Activated CD8-positive, alpha-beta T cell treated with anti-CD3 and anti-CD28 coated beads for 36 hours (primary cell): ENCODE measurements at regions of chr11 and their contacts with region 1.

Region 1: GRCh38 chr11:130861902-130862860 is 54.1 kb downstream of the SNX19 start:
- DNase-seq: peak; percentile 93
- ATAC-seq: peak; percentile 96
- H3K4me3 Mint-ChIP-seq: no peak overlapping the region
- H3K27ac Mint-ChIP-seq: no peak overlapping the region
- H3K4me1 Mint-ChIP-seq: peaks cover 3% of the 10 kb centered on the region
- H3K27me3 Mint-ChIP-seq: peaks cover 3% of the 10 kb centered on the region
- CTCF ChIP-seq: peak; percentile 98

Region 2: DNA sequence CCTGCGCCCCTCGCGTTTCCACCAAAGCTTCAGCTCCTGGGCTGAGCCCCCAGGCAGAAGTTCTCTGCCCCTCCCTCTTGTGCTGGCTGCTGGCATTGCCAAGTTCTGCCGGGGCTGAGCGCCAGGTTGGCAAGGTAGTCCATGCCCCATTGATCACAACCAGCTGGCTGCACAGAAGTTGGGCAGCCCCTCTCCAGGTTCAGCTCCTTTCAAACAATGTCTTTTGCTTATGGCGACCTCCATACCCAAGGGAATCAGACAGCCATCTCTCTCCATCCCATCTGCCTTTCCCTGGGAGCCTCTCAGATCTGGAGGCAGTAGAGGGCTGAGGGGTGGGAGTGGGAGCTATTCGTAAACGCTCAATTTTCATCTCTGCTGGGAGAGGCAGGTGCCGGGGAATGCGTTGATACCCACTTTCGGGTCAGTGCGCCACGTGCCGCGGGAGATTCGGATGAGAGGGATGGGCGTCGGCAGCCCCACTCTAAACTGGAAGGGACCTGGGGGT is 435.3 kb before region 1 on chr11:
- CTCF ChIA-PET with region 1: interaction called, 279 read pairs
- POLR2A ChIA-PET with region 1: no interaction called
- intact Hi-C with region 1: no loop called
- DNase-seq: no peak
- ATAC-seq: no peak
- H3K4me3 Mint-ChIP-seq: no peak overlapping the region
- H3K27ac Mint-ChIP-seq: no peak overlapping the region
- H3K4me1 Mint-ChIP-seq: peaks cover 7% of the 10 kb centered on the region
- H3K27me3 Mint-ChIP-seq: peaks cover 45% of the 10 kb centered on the region
- CTCF ChIP-seq: no peak

Region 3: GRCh38 chr11:130442737-130443136 is 419.4 kb before region 1 on chr11:
- CTCF ChIA-PET with region 1: interaction called, 279 read pairs
- POLR2A ChIA-PET with region 1: no interaction called
- intact Hi-C with region 1: no loop called
- DNase-seq: no peak
- ATAC-seq: no peak
- H3K4me3 Mint-ChIP-seq: no peak overlapping the region
- H3K27ac Mint-ChIP-seq: no peak overlapping the region
- H3K4me1 Mint-ChIP-seq: peaks cover 10% of the 10 kb centered on the region
- H3K27me3 Mint-ChIP-seq: peaks cover 11% of the 10 kb centered on the region
- CTCF ChIP-seq: no peak

Region 4: DNA sequence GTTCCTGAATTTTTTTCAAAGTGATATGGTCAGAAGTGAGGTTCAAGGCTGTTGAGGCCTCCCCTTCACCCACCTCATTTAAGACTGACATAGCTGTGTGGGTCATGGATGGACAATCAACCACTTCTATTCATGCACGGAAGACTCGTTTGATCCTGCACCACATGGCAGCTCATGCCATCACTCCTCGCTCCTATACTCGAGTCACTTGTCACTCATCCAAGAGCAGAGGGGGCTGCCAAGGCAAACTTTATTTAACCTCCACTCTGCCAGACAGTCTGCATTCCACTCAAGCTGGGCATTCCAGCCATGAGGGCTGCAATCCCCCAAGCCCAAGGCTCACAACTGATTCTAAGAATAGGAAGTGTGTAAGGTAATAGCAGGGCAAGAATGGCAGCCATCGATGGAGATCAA is 20.0 kb after region 1 on chr11:
- CTCF ChIA-PET with region 1: interaction called, 31 read pairs
- POLR2A ChIA-PET with region 1: interaction called, 5 read pairs
- intact Hi-C with region 1: no loop called
- DNase-seq: no peak
- ATAC-seq: no peak
- H3K4me3 Mint-ChIP-seq: no peak overlapping the region
- H3K27ac Mint-ChIP-seq: peak overlapping the region; percentile 4
- H3K4me1 Mint-ChIP-seq: peaks cover 11% of the 10 kb centered on the region
- H3K27me3 Mint-ChIP-seq: no peaks in the 10 kb centered on the region
- CTCF ChIP-seq: no peak

Region 5: GRCh38 chr11:130916238-130916855 is 54.2 kb after region 1 on chr11 and contains the start of gene SNX19:
- CTCF ChIA-PET with region 1: interaction called, 11 read pairs
- POLR2A ChIA-PET with region 1: interaction called, 3 read pairs
- intact Hi-C with region 1: no loop called
- DNase-seq: peak; percentile 89
- ATAC-seq: peak; percentile 100
- H3K4me3 Mint-ChIP-seq: peak within 1 kb of the TSS; percentile 77
- H3K27ac Mint-ChIP-seq: peak within 1 kb of the TSS; percentile 73
- H3K4me1 Mint-ChIP-seq: peaks cover 28% of the 10 kb centered on the region
- H3K27me3 Mint-ChIP-seq: no peaks in the 10 kb centered on the region
- CTCF ChIP-seq: peak; percentile 84
- total RNA-seq, gene SNX19: 20.9 to 22.7 TPM